WTC11 (cell line): ENCODE measurements at regions of chr4 and their contacts with region 1.

Region 1: DNA sequence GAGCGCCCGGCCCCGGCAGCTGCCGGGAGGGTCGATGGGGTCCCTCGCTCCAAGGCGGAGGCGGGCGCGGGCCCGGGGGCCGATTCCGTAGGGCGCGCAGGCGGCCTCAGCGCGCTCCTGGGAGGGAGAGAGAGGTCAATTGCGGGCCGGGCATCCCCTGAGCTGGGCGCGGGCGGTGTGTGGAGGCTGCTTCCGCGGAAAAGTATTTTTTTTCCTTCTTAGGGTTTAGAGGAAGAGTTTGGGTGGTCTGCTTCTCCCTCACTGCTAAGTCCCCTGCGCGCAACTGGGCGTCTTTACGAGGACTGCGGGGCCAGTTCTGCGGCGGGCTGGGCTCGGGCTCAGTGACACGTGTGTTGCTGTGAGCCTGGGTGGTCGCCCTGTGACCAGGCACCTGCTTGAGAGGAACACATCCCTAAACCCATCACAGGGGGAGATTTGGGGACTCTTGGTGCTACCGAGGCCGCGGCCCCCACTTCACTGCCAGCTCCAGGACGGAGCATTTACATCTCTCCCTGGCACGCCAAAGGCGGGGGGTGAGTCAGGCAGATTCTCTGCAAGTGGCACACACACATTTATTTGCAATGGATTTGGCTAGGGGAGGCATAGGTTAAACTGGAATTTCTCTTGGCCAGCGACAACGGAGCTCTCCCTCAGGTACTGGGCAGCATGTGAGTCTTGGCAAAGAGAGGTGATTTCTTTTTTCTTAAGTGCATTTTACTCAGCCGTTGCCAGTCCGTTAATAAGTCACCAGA is 151.2 kb upstream of the SLC4A4 start:
- DNase-seq: peak; percentile 43
- ATAC-seq: peak; percentile 25
- H3K4me3 Mint-ChIP-seq: peak overlapping the region; percentile 76
- H3K27ac Mint-ChIP-seq: no peak overlapping the region
- H3K4me1 Mint-ChIP-seq: peaks cover 16% of the 10 kb centered on the region
- H3K27me3 Mint-ChIP-seq: peaks cover 47% of the 10 kb centered on the region
- CTCF ChIP-seq: no peak

Region 2: GRCh38 chr4:71229477-71230270 is 42.1 kb after region 1 on chr4:
- CTCF ChIA-PET with region 1: interaction called, 11 read pairs
- POLR2A ChIA-PET with region 1: no interaction called
- DNase-seq: peak; percentile 16
- ATAC-seq: peak; percentile 84
- H3K4me3 Mint-ChIP-seq: no peak overlapping the region
- H3K27ac Mint-ChIP-seq: no peak overlapping the region
- H3K4me1 Mint-ChIP-seq: peaks cover 25% of the 10 kb centered on the region
- H3K27me3 Mint-ChIP-seq: no peaks in the 10 kb centered on the region
- CTCF ChIP-seq: peak; percentile 12; the same call in 1 of the 2 replicates

Region 3: DNA sequence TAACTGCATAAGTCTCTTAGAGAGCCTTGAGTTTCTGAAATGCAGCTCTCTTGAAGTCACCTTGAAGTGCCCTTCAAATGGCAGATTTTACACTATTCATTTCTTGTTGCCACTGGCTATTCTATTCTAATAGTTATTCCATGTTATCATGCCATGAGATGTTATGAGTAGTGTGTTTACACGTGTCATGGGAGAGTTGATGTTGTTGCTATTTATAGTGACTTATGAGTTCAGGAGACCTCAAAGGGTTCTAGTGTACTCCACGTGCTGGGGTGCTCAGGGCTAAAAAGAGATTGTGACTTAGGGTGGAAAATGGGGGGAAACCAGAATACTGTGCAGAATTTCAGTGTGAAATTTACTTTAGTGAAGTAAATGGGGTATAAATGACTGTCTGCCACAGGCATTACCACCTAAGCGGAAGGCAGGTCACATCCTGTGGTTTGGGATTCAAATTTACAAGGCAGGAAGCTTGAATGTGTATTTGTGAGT is 74.1 kb after region 1 on chr4:
- CTCF ChIA-PET with region 1: no interaction called
- POLR2A ChIA-PET with region 1: no interaction called
- DNase-seq: no peak
- ATAC-seq: no peak
- H3K4me3 Mint-ChIP-seq: no peak overlapping the region
- H3K27ac Mint-ChIP-seq: peak overlapping the region; percentile 10; the same call in 1 of the 2 replicates
- H3K4me1 Mint-ChIP-seq: peaks cover 14% of the 10 kb centered on the region
- H3K27me3 Mint-ChIP-seq: no peaks in the 10 kb centered on the region
- CTCF ChIP-seq: no peak

Region 4: GRCh38 chr4:71296945-71297344 is 109.4 kb after region 1 on chr4:
- CTCF ChIA-PET with region 1: no interaction called
- POLR2A ChIA-PET with region 1: no interaction called
- DNase-seq: no peak
- ATAC-seq: no peak
- H3K4me3 Mint-ChIP-seq: no peak overlapping the region
- H3K27ac Mint-ChIP-seq: no peak overlapping the region
- H3K4me1 Mint-ChIP-seq: peaks cover 3% of the 10 kb centered on the region; the same call in 1 of the 2 replicates
- H3K27me3 Mint-ChIP-seq: no peaks in the 10 kb centered on the region; the same call in 1 of the 2 replicates
- CTCF ChIP-seq: no peak